ENCODE measurements at regions of chr5 and their contacts with region 1.

Region 1: DNA sequence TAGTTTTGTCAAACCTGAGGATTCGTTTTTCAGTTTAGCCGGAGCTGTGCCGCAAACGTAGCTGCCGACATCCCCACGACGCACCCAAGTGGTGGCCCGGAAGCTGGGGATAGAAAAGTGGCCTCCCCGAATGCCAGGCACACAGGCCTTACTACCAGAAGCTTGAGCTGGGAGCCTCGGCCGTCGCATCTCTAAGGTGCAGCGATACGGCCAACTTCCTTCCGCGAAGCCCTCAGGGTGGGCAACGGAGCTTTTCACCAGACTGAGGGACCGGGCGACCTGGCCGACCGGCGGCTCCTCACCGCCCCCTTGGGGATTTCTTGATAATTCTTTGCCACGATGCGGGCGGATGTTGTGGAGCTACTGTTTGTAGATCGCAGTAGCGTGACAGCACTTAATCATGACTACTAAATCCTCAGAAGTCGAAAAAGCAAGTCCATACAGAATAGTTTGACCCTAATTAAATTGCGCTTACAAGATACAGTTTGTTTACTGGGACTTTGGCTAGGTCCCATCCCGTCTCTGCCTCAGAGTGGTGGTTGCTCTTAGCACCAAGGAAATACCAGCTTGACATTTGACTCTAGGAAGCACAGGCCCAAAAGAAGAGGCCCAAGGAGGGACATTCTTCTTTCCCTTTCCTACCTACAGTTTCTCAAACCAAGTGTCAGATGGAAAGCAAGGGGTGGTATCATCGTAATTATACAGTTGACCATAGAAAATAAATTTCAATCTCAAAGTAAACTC is 613 bp upstream of the TMEM267 start:
- DNase-seq: peak; percentile 69
- ATAC-seq: peak; percentile 80
- H3K4me3 ChIP-seq: peak overlapping the region; percentile 76 to 81 (median 81)
- H3K27ac ChIP-seq: peak overlapping the region; percentile 91
- H3K4me1 ChIP-seq: peaks cover 42% of the 10 kb centered on the region
- H3K27me3 ChIP-seq: no peaks in the 10 kb centered on the region; a peak in 1 of 5 replicates
- CTCF ChIP-seq: peak; percentile 83
- EP300 ChIP-seq: no peak
- POLR2A ChIP-seq: no peak
- RAD21 ChIP-seq: peak; percentile 69

Region 2: GRCh38 chr5:43156388-43156787 is 327.9 kb before region 1 on chr5:
- CTCF ChIA-PET with region 1: no interaction called
- POLR2A ChIA-PET with region 1: no interaction called
- in situ Hi-C with region 1: no loop called
- intact Hi-C with region 1: no loop called
- DNase-seq: no peak
- ATAC-seq: no peak
- H3K4me3 ChIP-seq: no peak overlapping the region
- H3K27ac ChIP-seq: no peak overlapping the region
- H3K4me1 ChIP-seq: no peaks in the 10 kb centered on the region
- H3K27me3 ChIP-seq: no peaks in the 10 kb centered on the region
- CTCF ChIP-seq: no peak
- EP300 ChIP-seq: no peak
- POLR2A ChIP-seq: no peak
- RAD21 ChIP-seq: no peak

Region 3: GRCh38 chr5:43227655-43228054 is 256.6 kb before region 1 on chr5:
- CTCF ChIA-PET with region 1: no interaction called
- POLR2A ChIA-PET with region 1: interaction called, 3 read pairs
- in situ Hi-C with region 1: no loop called
- intact Hi-C with region 1: loop called (anchors 2 kb)
- DNase-seq: peak; percentile 46
- ATAC-seq: peak; percentile 41; the same call in 1 of the 3 replicates
- H3K4me3 ChIP-seq: no peak overlapping the region
- H3K27ac ChIP-seq: no peak overlapping the region
- H3K4me1 ChIP-seq: no peaks in the 10 kb centered on the region
- H3K27me3 ChIP-seq: no peaks in the 10 kb centered on the region; a peak in 1 of 5 replicates
- CTCF ChIP-seq: peak; percentile 44
- EP300 ChIP-seq: no peak
- POLR2A ChIP-seq: no peak
- RAD21 ChIP-seq: no peak

Region 4: GRCh38 chr5:43389679-43390329 is 94.5 kb before region 1 on chr5:
- CTCF ChIA-PET with region 1: interaction called, 8 read pairs
- POLR2A ChIA-PET with region 1: interaction called, 6 read pairs
- in situ Hi-C with region 1: loop called (anchors 10 kb)
- intact Hi-C with region 1: loop called (anchors 1 kb)
- DNase-seq: peak; percentile 87
- ATAC-seq: peak; percentile 98
- H3K4me3 ChIP-seq: no peak overlapping the region
- H3K27ac ChIP-seq: no peak overlapping the region
- H3K4me1 ChIP-seq: no peaks in the 10 kb centered on the region
- H3K27me3 ChIP-seq: no peaks in the 10 kb centered on the region
- CTCF ChIP-seq: peak; percentile 87
- EP300 ChIP-seq: no peak
- POLR2A ChIP-seq: no peak
- RAD21 ChIP-seq: peak; percentile 88

Region 5: DNA sequence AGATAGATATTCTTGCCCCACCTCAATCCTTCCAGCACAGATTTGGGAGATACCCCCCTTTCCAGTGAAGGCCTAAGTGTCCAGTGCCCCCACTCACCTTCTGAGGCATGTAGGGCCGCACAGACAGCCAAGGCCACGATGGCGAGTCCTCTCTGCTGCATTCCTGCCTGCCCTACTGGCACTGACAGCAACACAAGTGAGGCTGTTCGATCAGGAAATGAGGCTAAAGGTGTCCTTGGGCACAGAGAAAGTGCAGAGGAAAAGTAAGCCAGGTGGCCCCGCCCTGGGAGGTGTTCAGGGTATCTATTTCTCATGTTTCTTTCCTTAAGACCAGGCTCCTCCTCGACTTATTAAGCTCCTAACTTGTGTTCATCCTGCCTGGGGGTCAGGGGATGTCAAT is 72.1 kb before region 1 on chr5 and contains the start of gene CCL28:
- CTCF ChIA-PET with region 1: no interaction called
- POLR2A ChIA-PET with region 1: interaction called, 15 read pairs
- in situ Hi-C with region 1: no loop called
- intact Hi-C with region 1: no loop called
- DNase-seq: no peak
- ATAC-seq: peak; percentile 84
- H3K4me3 ChIP-seq: peak within 1 kb of the TSS in 2 of 3 experiments; percentile 32 to 33; a peak in 3 of 6 replicates
- H3K27ac ChIP-seq: no peak within 1 kb of the TSS
- H3K4me1 ChIP-seq: peaks cover 25% of the 10 kb centered on the region
- H3K27me3 ChIP-seq: no peaks in the 10 kb centered on the region; a peak in 2 of 5 replicates
- CTCF ChIP-seq: no peak
- EP300 ChIP-seq: no peak
- POLR2A ChIP-seq: no peak
- RAD21 ChIP-seq: no peak
- total RNA-seq, gene CCL28: not detected in 2 replicates

Region 6: DNA sequence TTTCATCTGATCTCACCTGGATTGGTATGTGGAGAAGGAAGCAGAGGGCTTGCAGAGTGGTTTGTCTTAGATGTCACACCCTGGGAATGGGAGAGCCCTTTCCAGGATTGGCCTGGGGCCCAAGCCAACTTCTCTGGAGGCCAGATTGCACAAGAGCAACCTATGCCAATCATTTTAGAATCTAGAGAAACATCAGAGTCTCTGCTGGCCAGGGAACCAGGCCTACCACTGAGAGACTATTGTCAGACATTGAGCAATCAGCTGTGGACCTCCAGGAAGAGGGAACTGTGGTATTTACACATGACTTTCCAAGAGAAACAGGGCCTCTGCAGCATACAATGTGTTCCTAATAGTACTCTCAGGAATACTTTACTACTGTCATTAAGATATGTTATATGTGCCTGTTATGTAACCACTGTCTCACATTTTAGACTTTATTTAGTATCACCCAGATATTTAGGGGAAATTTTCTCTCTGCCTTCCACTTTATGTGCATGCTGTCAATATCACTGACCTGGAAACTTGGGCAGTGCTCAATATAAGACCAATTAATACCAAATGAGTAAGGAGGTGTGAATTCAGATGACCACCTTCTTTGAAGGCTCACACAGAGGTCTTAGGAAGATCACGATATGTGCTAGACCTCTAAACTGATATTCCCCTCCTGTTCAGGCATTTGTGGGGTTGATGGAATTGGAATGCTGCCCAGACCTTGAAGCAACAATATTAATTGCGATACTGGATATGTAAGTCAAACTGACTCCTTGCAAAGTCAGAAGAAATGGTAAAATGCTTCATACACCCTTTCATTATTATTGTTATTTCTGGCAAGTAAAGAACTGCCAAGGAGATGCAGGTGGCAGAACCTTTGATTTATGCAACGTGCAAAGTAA is 51.6 kb before region 1 on chr5:
- CTCF ChIA-PET with region 1: no interaction called
- POLR2A ChIA-PET with region 1: interaction called, 17 read pairs
- in situ Hi-C with region 1: no loop called
- intact Hi-C with region 1: loop called (anchors 2 kb)
- DNase-seq: peak; percentile 98
- ATAC-seq: peak; percentile 96
- H3K4me3 ChIP-seq: peak overlapping the region in 2 of 3 experiments; percentile 29 to 30; a peak in 1 of 6 replicates
- H3K27ac ChIP-seq: peak overlapping the region; percentile 51
- H3K4me1 ChIP-seq: peaks cover 72% of the 10 kb centered on the region
- H3K27me3 ChIP-seq: no peaks in the 10 kb centered on the region
- CTCF ChIP-seq: no peak
- EP300 ChIP-seq: peak; percentile 52 to 94; a peak in 3 of 4 replicates
- POLR2A ChIP-seq: no peak
- RAD21 ChIP-seq: no peak

Region 7: DNA sequence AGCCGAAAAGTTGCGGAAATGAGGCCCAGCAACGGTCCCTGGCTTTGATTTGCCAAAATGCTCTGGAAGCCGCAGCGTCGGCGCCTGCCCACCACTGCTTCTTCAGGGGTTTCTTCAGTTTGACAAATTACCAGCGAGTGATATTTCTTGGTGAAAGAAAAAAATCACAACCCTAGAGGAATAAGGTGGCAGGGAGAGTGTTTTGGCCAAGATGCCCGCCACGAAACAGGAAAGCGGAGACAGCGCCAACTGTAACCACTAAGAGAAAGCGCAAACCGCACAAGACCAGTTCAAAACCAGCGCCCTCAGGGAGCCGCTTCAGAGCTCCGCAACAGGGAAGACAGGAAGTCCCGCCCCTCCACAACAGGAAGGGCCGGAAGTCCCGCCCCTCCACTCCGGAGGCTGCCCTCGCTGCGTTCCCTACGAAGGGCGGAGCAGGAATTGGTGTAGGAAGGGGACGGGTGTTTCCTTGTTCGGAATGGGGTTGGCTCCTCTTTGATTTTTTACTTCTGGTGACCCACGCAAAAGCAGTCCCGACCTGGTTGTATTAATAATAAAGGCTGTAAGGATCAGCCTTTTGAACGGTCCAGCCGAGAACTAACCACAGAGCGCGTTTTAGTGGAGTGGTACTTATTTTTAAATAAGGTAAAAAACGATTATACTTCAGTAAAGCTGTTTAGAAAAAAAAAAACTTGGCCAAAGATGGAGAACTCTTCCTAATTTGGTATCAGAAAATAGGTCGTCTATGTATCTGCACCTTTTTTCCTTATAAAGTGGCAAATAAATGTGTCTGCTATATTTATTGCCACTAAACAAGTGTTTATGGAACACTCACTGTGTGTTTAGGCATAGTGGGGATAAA is 30.8 kb after region 1 on chr5 and contains the start of gene C5orf34:
- CTCF ChIA-PET with region 1: no interaction called
- POLR2A ChIA-PET with region 1: interaction called, 52 read pairs
- in situ Hi-C with region 1: no loop called
- intact Hi-C with region 1: loop called (anchors 2 kb)
- DNase-seq: peak; percentile 93
- ATAC-seq: peak; percentile 99
- H3K4me3 ChIP-seq: peak within 1 kb of the TSS; percentile 74 to 92 (median 82)
- H3K27ac ChIP-seq: peak within 1 kb of the TSS; percentile 83
- H3K4me1 ChIP-seq: peaks cover 35% of the 10 kb centered on the region
- H3K27me3 ChIP-seq: no peaks in the 10 kb centered on the region
- CTCF ChIP-seq: peak; percentile 30; the same call in 1 of the 2 replicates
- EP300 ChIP-seq: no peak
- POLR2A ChIP-seq: peak; percentile 80 to 90
- RAD21 ChIP-seq: no peak
- total RNA-seq, gene C5orf34: 6.2 and 6.4 TPM in 2 replicates

Region 8: DNA sequence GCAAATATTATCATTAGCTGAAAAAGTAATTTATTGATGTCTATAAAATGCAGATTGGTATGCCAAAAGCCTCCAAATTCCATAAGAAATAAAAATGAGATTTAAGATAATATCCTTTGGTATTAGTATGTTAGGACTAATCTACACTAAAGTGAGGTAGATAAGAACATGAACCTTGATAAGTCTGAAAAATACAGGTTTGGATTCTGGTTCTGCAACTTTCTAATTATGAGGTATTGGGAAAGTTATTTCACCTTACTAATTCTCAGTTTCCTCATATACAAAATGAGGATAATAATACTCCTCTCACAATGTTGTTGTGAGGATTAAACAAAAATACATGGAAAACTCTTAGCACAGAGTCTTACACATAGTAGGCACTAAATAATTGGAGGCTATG is 418.9 kb after region 1 on chr5:
- CTCF ChIA-PET with region 1: no interaction called
- POLR2A ChIA-PET with region 1: no interaction called
- in situ Hi-C with region 1: no loop called
- intact Hi-C with region 1: no loop called
- DNase-seq: no peak
- ATAC-seq: no peak
- H3K4me3 ChIP-seq: no peak overlapping the region
- H3K27ac ChIP-seq: no peak overlapping the region
- H3K4me1 ChIP-seq: no peaks in the 10 kb centered on the region
- H3K27me3 ChIP-seq: no peaks in the 10 kb centered on the region
- CTCF ChIP-seq: no peak
- EP300 ChIP-seq: no peak
- POLR2A ChIP-seq: no peak
- RAD21 ChIP-seq: no peak